Tibial artery (tissue), 4 donors: ENCODE measurements at regions of chr6 and their contacts with region 1.

Region 1: DNA sequence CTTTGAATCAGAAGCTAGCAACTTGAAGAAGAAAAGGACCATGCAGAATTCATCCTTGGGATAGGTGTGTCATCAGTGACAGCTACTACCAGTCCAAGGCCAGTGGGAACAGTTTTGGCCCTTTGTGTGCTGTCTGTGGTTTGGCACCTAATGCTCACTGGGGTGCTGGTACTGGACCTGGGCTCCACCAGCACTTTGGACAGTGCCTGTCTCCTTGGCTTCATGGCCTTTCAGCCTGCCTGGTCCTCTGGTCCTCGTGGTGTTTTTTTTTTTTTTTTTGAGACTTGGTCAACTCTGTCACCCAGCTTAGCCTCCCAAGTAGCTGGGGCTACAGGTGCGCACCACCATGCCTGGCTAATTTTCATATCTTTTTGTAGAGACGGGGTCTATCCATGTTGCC is 56.3 kb downstream of the AKAP7 start:
- DNase-seq: no peak
- H3K4me3 ChIP-seq: no peak overlapping the region
- H3K27ac ChIP-seq: no peak overlapping the region
- H3K4me1 ChIP-seq: no peaks in the 10 kb centered on the region
- H3K27me3 ChIP-seq: no peaks in the 10 kb centered on the region
- CTCF ChIP-seq: no peak

Region 2: DNA sequence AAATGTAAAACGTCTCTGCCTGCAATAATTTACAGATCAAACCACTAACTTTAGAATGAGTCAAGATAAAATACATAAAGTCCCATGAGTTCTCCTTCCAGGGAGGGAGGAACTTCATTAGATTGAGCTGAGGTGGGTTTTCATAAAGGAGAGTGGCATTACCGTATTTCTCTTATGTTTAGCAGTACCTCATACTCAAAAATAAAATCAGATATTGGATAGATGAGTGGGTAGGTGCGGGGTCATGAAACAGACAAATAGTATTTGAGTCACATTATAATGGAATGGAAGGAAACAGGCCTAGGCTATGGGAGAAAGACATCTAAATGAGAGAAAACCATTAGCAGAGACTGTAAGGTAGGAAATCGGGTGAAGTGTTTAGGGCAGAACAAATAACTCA is 530.5 kb before region 1 on chr6:
- intact Hi-C with region 1: no loop called
- DNase-seq: no peak
- H3K4me3 ChIP-seq: no peak overlapping the region
- H3K27ac ChIP-seq: no peak overlapping the region
- H3K4me1 ChIP-seq: no peaks in the 10 kb centered on the region
- H3K27me3 ChIP-seq: no peaks in the 10 kb centered on the region
- CTCF ChIP-seq: no peak

Region 3: DNA sequence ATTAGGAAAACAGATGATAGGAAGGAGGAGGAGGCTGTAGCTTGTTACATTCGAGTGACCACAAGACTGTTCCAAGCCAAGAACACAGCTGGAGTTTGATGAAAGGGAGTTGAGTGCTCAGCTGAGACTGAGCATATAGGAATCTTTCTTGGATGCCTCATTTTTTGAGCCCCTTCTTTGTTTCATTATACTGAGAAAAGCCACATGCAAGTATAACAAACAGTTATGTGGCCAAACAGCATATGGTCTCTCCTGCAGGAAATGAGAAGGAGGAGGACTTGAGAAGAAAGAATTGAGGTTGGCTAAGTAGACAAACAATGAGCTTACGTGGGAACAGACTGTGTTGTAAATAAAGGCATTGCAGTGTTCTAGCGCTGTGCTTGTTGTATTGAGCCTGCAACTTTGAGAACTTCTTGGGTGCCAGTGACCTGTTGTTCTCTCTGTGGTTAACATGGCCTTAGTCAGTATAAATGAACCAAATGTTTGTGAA is 22.0 kb after region 1 on chr6:
- intact Hi-C with region 1: loop called (anchors 1 kb)
- DNase-seq: no peak
- H3K4me3 ChIP-seq: no peak overlapping the region
- H3K27ac ChIP-seq: no peak overlapping the region
- H3K4me1 ChIP-seq: no peaks in the 10 kb centered on the region
- H3K27me3 ChIP-seq: no peaks in the 10 kb centered on the region
- CTCF ChIP-seq: no peak